ENCODE measurements at regions of chr1 and their contacts with region 1.

Region 1: GRCh38 chr1:32351399-32352238 is 10.7 kb downstream of the FAM229A start:
- DNase-seq: peak; percentile 89
- ATAC-seq: peak; percentile 80
- H3K4me3 ChIP-seq: peak overlapping the region; percentile 73 to 81 (median 74)
- H3K27ac ChIP-seq: peak overlapping the region; percentile 92
- H3K4me1 ChIP-seq: peaks cover 65% of the 10 kb centered on the region
- H3K27me3 ChIP-seq: no peaks in the 10 kb centered on the region
- CTCF ChIP-seq: peak; percentile 39
- EP300 ChIP-seq: no peak
- POLR2A ChIP-seq: peak; percentile 78 to 82
- RAD21 ChIP-seq: no peak; the same call in 1 of the 2 replicates

Region 2: GRCh38 chr1:32240140-32240951 is 111.3 kb before region 1 on chr1:
- CTCF ChIA-PET with region 1: no interaction called
- POLR2A ChIA-PET with region 1: interaction called, 10 read pairs
- in situ Hi-C with region 1: no loop called
- intact Hi-C with region 1: no loop called
- DNase-seq: no peak
- ATAC-seq: no peak
- H3K4me3 ChIP-seq: peak overlapping the region; percentile 42 to 57 (median 56); a peak in 3 of 6 replicates
- H3K27ac ChIP-seq: no peak overlapping the region
- H3K4me1 ChIP-seq: peaks cover 44% of the 10 kb centered on the region
- H3K27me3 ChIP-seq: no peaks in the 10 kb centered on the region
- CTCF ChIP-seq: no peak
- EP300 ChIP-seq: no peak
- POLR2A ChIP-seq: no peak
- RAD21 ChIP-seq: no peak

Region 3: GRCh38 chr1:32291708-32292492 is 59.7 kb before region 1 on chr1 and contains the start of gene HDAC1:
- CTCF ChIA-PET with region 1: no interaction called
- POLR2A ChIA-PET with region 1: interaction called, 19 read pairs
- in situ Hi-C with region 1: no loop called
- intact Hi-C with region 1: no loop called
- DNase-seq: peak; percentile 93
- ATAC-seq: peak; percentile 98
- H3K4me3 ChIP-seq: peak within 1 kb of the TSS; percentile 94 to 99 (median 98)
- H3K27ac ChIP-seq: peak within 1 kb of the TSS; percentile 67
- H3K4me1 ChIP-seq: peaks cover 64% of the 10 kb centered on the region
- H3K27me3 ChIP-seq: no peaks in the 10 kb centered on the region; a peak in 1 of 5 replicates
- CTCF ChIP-seq: no peak; the same call in 1 of the 2 replicates
- EP300 ChIP-seq: peak in 1 of 2 experiments; percentile 50; a peak in 2 of 4 replicates
- POLR2A ChIP-seq: peak; percentile 28 to 85; a peak in 3 of 4 replicates
- RAD21 ChIP-seq: 0 out of 2 replicates have a peak, but pooled peaks have one; percentile 10
- total RNA-seq, gene HDAC1: 93.5 and 109 TPM in 2 replicates

Region 4: GRCh38 chr1:32335790-32336590 is 15.6 kb before region 1 on chr1 and contains the start of gene MARCKSL1:
- CTCF ChIA-PET with region 1: interaction called, 4 read pairs
- POLR2A ChIA-PET with region 1: interaction called, 222 read pairs
- in situ Hi-C with region 1: no loop called
- intact Hi-C with region 1: loop called (anchors 2 kb)
- DNase-seq: peak; percentile 63
- ATAC-seq: peak; percentile 49
- H3K4me3 ChIP-seq: peak within 1 kb of the TSS; percentile 70 to 95 (median 84)
- H3K27ac ChIP-seq: peak within 1 kb of the TSS; percentile 68
- H3K4me1 ChIP-seq: peaks cover 57% of the 10 kb centered on the region
- H3K27me3 ChIP-seq: peaks cover 0 to 4% of the 10 kb centered on the region in 2 experiments; a peak in 2 of 5 replicates
- CTCF ChIP-seq: no peak
- EP300 ChIP-seq: no peak
- POLR2A ChIP-seq: peak; percentile 91 to 93
- RAD21 ChIP-seq: no peak
- total RNA-seq, gene MARCKSL1: 81.9 and 85.1 TPM in 2 replicates

Region 5: DNA sequence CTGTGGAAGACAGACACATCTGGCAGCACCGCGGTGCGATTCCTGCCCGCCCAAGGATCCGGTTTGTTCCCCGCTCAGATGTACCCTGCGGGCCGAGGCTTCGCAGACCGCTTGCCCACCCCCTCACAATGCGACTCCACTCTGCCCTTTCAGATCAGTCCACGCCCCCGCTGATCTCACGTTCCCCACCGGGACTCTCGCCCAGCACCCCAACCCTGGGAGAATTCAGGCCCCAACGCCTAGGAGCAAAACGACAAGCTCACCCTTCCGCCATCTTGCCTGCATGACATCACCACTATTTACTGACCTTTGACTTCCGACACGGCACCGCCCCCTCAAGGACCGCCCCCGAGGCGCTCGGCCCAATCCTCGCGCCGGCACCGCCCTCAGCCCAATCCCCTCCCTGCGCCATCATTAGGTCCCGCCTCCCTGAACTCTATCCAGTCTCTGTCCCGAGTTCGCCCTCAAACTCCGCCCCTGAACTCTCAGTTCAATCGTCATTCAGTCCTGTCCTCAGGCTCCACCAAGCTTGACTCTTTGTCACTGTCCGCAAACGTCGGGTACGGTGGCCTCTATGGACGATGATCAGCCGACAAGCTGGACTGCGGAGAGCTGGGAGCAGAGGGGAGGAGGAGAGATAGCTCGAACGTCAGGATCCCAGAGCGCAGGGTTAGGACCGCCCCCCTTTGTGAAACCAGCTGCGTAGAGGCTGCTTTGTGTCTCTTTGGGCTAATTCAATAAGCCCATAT is 42.7 kb after region 1 on chr1 and contains the start of gene BSDC1:
- CTCF ChIA-PET with region 1: no interaction called
- POLR2A ChIA-PET with region 1: interaction called, 37 read pairs
- in situ Hi-C with region 1: no loop called
- intact Hi-C with region 1: loop called (anchors 2 kb)
- DNase-seq: peak; percentile 99
- ATAC-seq: peak; percentile 98
- H3K4me3 ChIP-seq: peak within 1 kb of the TSS; percentile 77 to 99 (median 91)
- H3K27ac ChIP-seq: peak within 1 kb of the TSS; percentile 96
- H3K4me1 ChIP-seq: peaks cover 31% of the 10 kb centered on the region
- H3K27me3 ChIP-seq: no peaks in the 10 kb centered on the region; a peak in 1 of 5 replicates
- CTCF ChIP-seq: peak; percentile 31; the same call in 1 of the 2 replicates
- EP300 ChIP-seq: no peak
- POLR2A ChIP-seq: peak; percentile 77 to 96
- RAD21 ChIP-seq: no peak; the same call in 1 of the 2 replicates
- total RNA-seq, gene BSDC1: 33.2 and 40.3 TPM in 2 replicates

Measured in HepG2 (cell line).